HepG2 (cell line): ENCODE measurements at regions of chr5 and their contacts with region 1.

Region 1: GRCh38 chr5:136174021-136174659 is 18.8 kb downstream of the SMIM32 start:
- DNase-seq: peak; percentile 67
- ATAC-seq: peak; percentile 90
- H3K4me3 ChIP-seq: no peak overlapping the region
- H3K27ac ChIP-seq: no peak overlapping the region
- H3K4me1 ChIP-seq: no peaks in the 10 kb centered on the region
- H3K27me3 ChIP-seq: no peaks in the 10 kb centered on the region
- CTCF ChIP-seq: peak; percentile 72
- EP300 ChIP-seq: no peak
- POLR2A ChIP-seq: no peak
- RAD21 ChIP-seq: peak; percentile 54

Region 2: GRCh38 chr5:136080483-136081216 is 93.5 kb before region 1 on chr5:
- CTCF ChIA-PET with region 1: interaction called, 5 read pairs
- POLR2A ChIA-PET with region 1: no interaction called
- in situ Hi-C with region 1: no loop called
- intact Hi-C with region 1: loop called (anchors 5 kb)
- DNase-seq: no peak
- ATAC-seq: no peak
- H3K4me3 ChIP-seq: no peak overlapping the region
- H3K27ac ChIP-seq: no peak overlapping the region
- H3K4me1 ChIP-seq: peaks cover 29% of the 10 kb centered on the region
- H3K27me3 ChIP-seq: no peaks in the 10 kb centered on the region
- CTCF ChIP-seq: no peak
- EP300 ChIP-seq: no peak
- POLR2A ChIP-seq: no peak
- RAD21 ChIP-seq: no peak

Region 3: DNA sequence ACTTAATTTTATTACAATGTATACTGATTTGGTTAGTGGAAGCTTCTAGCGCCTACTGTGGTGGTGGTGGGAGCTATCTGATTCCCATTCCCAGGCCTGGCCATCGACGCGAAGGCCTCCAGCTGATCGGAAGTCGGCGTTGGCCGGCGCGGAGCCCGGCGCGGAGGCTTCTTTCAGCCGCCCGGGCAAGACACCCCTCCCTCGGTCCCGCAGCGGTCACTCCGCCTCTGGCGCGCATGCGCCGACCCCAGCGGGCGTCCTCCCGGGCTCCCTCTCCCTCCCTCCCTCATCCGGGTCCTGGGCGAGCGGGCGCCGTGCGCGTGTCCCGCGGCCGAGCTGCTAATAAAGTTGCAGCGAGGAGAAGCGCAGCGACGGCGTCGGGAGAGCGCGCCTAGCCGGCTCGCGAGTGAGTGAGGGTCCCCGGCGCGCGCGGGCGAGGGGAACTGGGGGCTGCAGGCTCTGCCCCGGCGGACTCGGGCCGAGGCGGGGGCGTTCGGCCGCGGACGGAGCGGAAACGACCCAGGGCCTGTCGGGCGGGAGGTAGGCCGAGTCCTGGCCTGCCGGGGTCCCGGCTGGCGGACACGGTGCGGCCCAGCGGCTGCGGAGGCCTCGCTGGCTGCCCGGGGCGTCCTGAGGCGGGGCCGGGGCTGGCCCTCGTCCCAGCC is 41.5 kb before region 1 on chr5 and contains the start of gene SMAD5:
- CTCF ChIA-PET with region 1: no interaction called
- POLR2A ChIA-PET with region 1: no interaction called
- in situ Hi-C with region 1: no loop called
- intact Hi-C with region 1: loop called (anchors 5 kb)
- DNase-seq: peak; percentile 88
- ATAC-seq: peak; percentile 89
- H3K4me3 ChIP-seq: peak within 1 kb of the TSS; percentile 83 to 96 (median 89)
- H3K27ac ChIP-seq: peak within 1 kb of the TSS; percentile 92
- H3K4me1 ChIP-seq: peaks cover 56% of the 10 kb centered on the region
- H3K27me3 ChIP-seq: no peaks in the 10 kb centered on the region; a peak in 1 of 5 replicates
- CTCF ChIP-seq: no peak
- EP300 ChIP-seq: peak in 1 of 2 experiments; percentile 27; a peak in 2 of 4 replicates
- POLR2A ChIP-seq: peak; percentile 66 to 71
- RAD21 ChIP-seq: peak; percentile 60
- total RNA-seq, gene SMAD5: 48.5 and 81.0 TPM in 2 replicates

Region 4: GRCh38 chr5:136190091-136190720 is 16.1 kb after region 1 on chr5:
- CTCF ChIA-PET with region 1: no interaction called
- POLR2A ChIA-PET with region 1: no interaction called
- in situ Hi-C with region 1: no loop called
- intact Hi-C with region 1: no loop called
- DNase-seq: no peak
- ATAC-seq: no peak
- H3K4me3 ChIP-seq: no peak overlapping the region
- H3K27ac ChIP-seq: no peak overlapping the region
- H3K4me1 ChIP-seq: peaks cover 33% of the 10 kb centered on the region
- H3K27me3 ChIP-seq: peaks cover 0 to 19% of the 10 kb centered on the region in 2 experiments; a peak in 3 of 5 replicates
- CTCF ChIP-seq: no peak
- EP300 ChIP-seq: no peak
- POLR2A ChIP-seq: no peak
- RAD21 ChIP-seq: no peak